GM10248 (cell line): ENCODE measurements at regions of chr3 and their contacts with region 1.

Region 1: GRCh38 chr3:14672588-14672987 is 2.4 kb upstream of the C3orf20 start:
- DNase-seq: no peak
- CTCF ChIP-seq: no peak

Region 2: DNA sequence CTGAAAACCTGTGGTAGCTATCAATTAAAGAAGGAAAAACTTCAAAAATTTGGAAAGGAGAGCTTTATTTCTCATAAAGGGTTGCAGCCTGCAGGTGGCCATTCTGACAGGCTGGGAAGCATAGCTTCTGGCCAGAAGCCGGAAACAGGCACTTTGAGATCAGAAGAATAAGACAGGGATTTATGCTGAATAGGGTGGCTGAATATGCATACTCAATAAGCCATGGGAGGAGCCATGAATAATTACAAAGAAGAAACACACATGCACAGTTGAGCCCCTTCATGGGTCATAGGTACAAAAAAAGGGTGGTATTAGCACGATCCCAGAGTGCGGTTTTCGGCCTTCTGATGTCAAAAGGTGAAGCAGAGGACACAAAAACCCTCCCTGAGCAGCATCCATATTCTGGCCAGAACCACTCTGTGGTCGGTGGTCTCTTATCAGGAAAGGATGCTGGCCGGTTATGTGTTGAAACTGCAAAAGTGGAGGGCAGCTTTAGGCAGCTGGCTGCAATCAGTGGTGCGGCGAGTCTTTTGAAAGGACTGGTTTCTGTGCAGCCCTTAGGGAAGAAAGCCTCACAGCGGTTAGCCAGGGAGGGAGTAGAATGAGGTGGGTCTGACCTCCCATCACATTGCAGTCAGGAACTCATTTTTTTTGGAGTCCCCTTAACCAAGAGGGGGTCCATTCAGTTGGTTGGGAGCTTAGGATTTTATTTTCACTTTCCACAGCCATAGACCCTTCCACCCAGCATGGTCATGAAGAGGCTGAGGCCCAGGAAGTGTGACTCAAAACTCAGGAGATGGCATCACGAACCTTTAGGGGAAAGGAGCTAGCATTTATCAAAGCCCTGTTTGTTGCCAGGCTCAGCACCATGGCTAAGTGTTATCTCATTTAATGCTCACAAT is 55.7 kb before region 1 on chr3:
- CTCF ChIA-PET with region 1: no interaction called
- POLR2A ChIA-PET with region 1: no interaction called
- DNase-seq: no peak
- CTCF ChIP-seq: no peak

Region 3: GRCh38 chr3:14651440-14652251 is 20.9 kb before region 1 on chr3 and contains the start of gene CCDC174:
- CTCF ChIA-PET with region 1: interaction called, 24 read pairs
- POLR2A ChIA-PET with region 1: no interaction called
- DNase-seq: peak; percentile 94
- CTCF ChIP-seq: no peak

Region 4: GRCh38 chr3:14691239-14691638 is 18.7 kb after region 1 on chr3:
- CTCF ChIA-PET with region 1: interaction called, 31 read pairs
- POLR2A ChIA-PET with region 1: no interaction called
- DNase-seq: peak; percentile 50
- CTCF ChIP-seq: no peak

Region 5: GRCh38 chr3:14976317-14976716 is 303.7 kb after region 1 on chr3:
- CTCF ChIA-PET with region 1: no interaction called
- POLR2A ChIA-PET with region 1: no interaction called
- DNase-seq: no peak
- CTCF ChIP-seq: no peak